BJ (cell line): ENCODE measurements at regions of chr2 and their contacts with region 1.

Region 1: GRCh38 chr2:67917332-67918054 is 145.3 kb downstream of the C1D start:
- DNase-seq: peak; percentile 99
- H3K4me3 ChIP-seq: no peak overlapping the region
- H3K27me3 ChIP-seq: no peaks in the 10 kb centered on the region
- CTCF ChIP-seq: no peak

Region 2: GRCh38 chr2:67854798-67855197 is 62.7 kb before region 1 on chr2:
- CTCF ChIA-PET with region 1: interaction called, 4 read pairs
- POLR2A ChIA-PET with region 1: interaction called, 16 read pairs
- DNase-seq: no peak
- H3K4me3 ChIP-seq: no peak overlapping the region
- H3K27me3 ChIP-seq: no peaks in the 10 kb centered on the region
- CTCF ChIP-seq: peak; percentile 8; the same call in 1 of the 2 replicates